Lower leg skin (tissue), 4 donors: ENCODE measurements at regions of chr10 and their contacts with region 1.

Region 1: DNA sequence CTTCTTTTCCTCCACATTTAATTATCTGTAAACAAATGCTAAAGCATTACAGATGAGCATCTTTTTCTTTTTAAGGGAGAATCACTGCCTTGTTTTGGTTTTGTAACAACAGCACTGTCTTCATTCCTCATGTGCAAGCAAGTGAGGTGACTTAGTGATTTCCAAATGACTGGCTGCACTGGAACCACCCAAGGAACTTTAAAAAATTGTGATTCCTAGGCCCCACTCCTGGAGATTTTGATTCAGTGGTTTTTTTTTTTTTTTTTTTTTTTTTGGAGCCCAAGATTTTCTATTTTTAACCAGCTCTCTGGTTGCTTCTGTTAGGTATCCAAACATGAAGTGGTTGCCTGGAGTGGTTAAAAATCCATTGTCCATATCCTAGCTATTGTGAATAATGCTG is 176.2 kb downstream of the LRMDA start:
- DNase-seq: no peak
- H3K4me3 ChIP-seq: no peak overlapping the region
- CTCF ChIP-seq: no peak
- POLR2A ChIP-seq: no peak

Region 2: DNA sequence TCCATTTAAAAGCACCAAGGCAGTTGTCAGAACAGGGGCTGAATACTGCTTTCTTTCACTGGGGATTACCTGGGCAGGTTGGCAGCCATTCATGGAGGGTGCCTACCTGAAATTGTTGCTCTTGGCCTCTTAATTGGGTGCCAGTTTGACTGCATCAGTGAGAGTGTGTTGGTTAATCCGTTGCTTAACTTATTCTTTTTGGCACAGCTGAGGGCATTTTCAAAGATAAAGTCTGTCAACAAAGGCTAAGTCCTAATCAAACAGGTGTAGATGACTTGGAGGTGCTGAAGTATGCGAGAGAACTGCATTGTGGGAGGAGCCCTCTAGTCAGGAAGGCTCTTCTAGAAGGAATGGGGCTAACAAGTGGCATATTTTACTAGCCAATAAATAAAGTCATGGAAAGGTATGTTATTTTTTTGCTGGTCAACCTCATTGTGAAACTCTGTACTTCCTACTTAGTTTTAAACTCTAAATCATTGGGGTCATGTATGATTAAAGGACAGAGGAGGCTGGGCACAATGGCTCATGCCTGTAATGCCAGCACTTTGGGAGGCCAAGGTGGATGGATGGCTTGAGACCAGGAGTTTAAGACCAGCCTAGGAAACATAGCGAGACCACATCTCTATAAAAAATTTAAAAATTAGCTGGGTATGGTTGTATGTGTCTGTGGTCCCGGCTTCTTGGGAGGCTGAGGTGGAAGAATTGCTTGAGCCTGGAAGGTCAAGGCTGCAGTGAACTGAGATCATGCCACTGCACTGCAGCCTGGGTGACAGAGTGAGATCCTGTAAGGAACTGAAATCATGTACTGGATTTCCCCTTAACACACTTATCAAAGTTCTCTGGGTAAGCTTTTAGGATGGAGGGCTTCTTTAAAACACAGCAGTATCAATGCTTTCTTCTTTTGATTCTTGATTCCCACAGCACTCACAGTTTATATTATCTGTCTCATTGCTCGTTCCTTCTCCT is 42.0 kb before region 1 on chr10:
- intact Hi-C with region 1: loop called (anchors 1 kb)
- DNase-seq: no peak
- H3K4me3 ChIP-seq: no peak overlapping the region
- CTCF ChIP-seq: no peak
- POLR2A ChIP-seq: no peak